ENCODE measurements at regions of chr16 and their contacts with region 1.

Region 1: DNA sequence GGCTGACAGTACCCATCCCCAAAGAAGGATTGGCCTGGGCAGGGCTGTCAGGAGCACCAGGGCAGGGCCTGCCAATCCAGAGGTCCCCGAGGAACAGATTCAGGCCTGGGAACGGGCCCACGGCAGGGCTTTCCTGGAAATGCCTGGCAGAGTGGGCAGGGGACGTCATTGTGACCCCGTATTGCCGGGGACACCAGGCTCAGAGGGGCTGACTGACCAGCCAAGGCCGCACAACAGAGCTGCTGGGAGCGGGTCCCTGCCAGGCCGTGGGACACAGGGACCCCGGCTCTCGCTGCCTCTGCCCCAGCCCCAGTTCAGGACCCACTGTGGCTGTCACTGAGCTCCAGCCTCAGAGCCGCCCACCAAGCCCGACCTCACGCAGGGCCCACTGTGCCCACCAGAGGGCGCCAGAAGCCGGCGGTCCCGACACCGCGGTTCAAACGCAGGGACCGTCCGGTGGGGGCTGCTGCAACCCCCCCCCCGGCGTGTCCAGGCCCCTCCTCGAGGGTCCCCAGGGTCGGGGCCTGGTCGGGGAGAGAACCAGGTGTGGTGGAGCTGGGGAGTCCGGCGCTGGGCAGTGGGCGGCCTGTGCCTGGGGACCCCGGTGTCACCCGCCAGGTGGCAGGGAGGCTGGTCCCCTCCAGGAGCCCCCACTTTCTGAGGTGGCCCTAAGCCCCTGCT is 15.2 kb upstream of the SSTR5 start:
- DNase-seq: peak; percentile 54
- H3K4me3 Mint-ChIP-seq: no peak overlapping the region
- H3K27ac Mint-ChIP-seq: no peak overlapping the region
- H3K4me1 Mint-ChIP-seq: no peaks in the 10 kb centered on the region
- H3K27me3 Mint-ChIP-seq: peaks cover 5% of the 10 kb centered on the region

Region 2: GRCh38 chr16:813204-813915 is 244.0 kb before region 1 on chr16:
- CTCF ChIA-PET with region 1: interaction called, 12 read pairs
- DNase-seq: peak; percentile 62
- H3K4me3 Mint-ChIP-seq: no peak overlapping the region
- H3K27ac Mint-ChIP-seq: no peak overlapping the region
- H3K4me1 Mint-ChIP-seq: peaks cover 6% of the 10 kb centered on the region
- H3K27me3 Mint-ChIP-seq: peaks cover 84% of the 10 kb centered on the region

Region 3: DNA sequence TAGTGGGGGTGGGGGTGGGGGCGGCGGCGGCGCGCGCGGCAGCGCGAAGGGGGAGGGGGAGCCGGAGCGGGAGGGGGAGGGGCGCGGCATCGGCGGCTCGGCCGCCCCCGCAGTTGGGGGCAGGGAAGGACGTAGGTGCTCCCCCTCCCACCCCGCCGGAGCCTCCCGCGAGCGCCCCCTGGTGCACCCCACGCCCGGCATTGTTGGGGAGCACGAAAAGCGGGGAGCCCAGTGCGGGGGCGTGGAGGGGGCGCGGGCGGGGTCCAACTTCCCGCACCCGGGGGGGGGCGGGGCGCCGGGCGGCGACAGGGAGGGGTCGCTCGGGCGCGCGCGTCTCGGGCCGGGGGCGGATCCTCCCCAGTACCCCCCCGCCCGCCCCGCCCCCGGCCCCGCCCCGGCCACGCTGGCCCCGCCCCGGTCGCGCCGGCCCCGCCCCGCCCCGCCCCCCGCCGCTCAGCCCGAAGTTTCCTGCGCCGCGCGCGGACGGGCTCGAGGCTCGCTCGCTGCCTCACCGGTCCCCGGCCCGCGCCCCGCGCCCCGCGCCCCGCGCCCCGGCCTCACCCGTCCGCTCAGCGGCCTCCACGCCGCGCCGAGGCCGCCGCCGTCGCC is 95.4 kb after region 1 on chr16 and contains the start of gene CACNA1H:
- CTCF ChIA-PET with region 1: no interaction called
- DNase-seq: peak; percentile 62
- H3K4me3 Mint-ChIP-seq: no peak within 1 kb of the TSS
- H3K27ac Mint-ChIP-seq: no peak within 1 kb of the TSS
- H3K4me1 Mint-ChIP-seq: no peaks in the 10 kb centered on the region
- H3K27me3 Mint-ChIP-seq: peaks cover 53% of the 10 kb centered on the region

Measured in activated naive CD4-positive, alpha-beta T cell treated with anti-CD3 and anti-CD28 coated beads, Interleukin-2, amount 10 ng/mL, durations not matched to agents 7 days and 5 days (primary cell).